Activated CD8-positive, alpha-beta memory T cell treated with anti-CD3 and anti-CD28 coated beads, Interleukin-2, amount 10 ng/mL, durations not matched to agents 7 days and 5 days (primary cell): ENCODE measurements at regions of chr12 and their contacts with region 1.

Region 1: GRCh38 chr12:123365025-123365917 is 624 bp upstream of the SBNO1 start:
- DNase-seq: peak; percentile 99
- ATAC-seq: peak; percentile 81
- H3K4me3 Mint-ChIP-seq: peak overlapping the region; percentile 81
- H3K27ac Mint-ChIP-seq: peak overlapping the region; percentile 96
- H3K4me1 Mint-ChIP-seq: peaks cover 16% of the 10 kb centered on the region
- H3K27me3 Mint-ChIP-seq: no peaks in the 10 kb centered on the region

Region 2: GRCh38 chr12:123271001-123271729 is 94.1 kb before region 1 on chr12:
- CTCF ChIA-PET with region 1: interaction called, 11 read pairs
- DNase-seq: peak; percentile 84
- ATAC-seq: peak; percentile 86
- H3K4me3 Mint-ChIP-seq: peak overlapping the region; percentile 78
- H3K27ac Mint-ChIP-seq: no peak overlapping the region
- H3K4me1 Mint-ChIP-seq: peaks cover 18% of the 10 kb centered on the region
- H3K27me3 Mint-ChIP-seq: no peaks in the 10 kb centered on the region

Region 3: DNA sequence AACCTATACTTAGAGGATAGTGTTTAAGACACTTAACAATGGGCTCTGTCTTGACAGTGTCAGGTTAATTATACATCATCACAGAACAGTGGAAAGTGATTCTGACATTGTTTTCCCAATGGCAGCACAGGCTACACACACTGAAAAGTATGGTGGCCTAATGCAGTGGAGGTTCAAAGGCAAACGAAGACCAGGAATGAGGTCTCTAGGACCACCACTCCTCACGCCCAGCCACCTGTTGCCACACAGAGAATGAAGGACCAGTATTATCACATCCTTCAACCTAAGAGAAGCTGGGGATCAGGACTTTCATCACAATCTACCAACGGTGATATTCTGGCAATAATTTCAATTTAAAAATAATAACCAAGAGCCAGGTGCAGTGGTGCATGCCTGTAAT is 59.1 kb before region 1 on chr12:
- CTCF ChIA-PET with region 1: no interaction called
- DNase-seq: no peak
- ATAC-seq: no peak
- H3K4me3 Mint-ChIP-seq: no peak overlapping the region
- H3K27ac Mint-ChIP-seq: no peak overlapping the region
- H3K4me1 Mint-ChIP-seq: no peaks in the 10 kb centered on the region
- H3K27me3 Mint-ChIP-seq: no peaks in the 10 kb centered on the region

Region 4: DNA sequence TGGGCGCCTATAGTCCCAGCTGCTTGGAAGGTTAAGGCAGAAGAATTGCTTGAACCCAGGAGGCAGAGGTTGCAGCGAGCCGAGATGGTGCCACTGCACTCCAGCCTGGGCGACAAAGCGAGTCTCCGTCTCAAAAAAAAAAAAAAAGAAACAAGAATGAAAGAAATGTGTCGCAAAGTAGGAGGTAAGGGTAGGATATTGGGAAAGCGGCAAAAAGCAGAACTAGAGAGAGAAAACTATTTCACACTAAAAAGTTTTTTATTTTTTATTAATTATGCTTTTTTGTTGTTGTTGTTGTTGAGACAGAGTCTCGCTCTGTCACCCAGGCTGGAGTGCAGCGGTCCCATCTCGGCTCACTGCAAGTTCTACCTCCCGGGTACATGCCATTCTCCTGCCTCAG is 18.3 kb before region 1 on chr12:
- CTCF ChIA-PET with region 1: no interaction called
- DNase-seq: no peak
- ATAC-seq: no peak
- H3K4me3 Mint-ChIP-seq: no peak overlapping the region
- H3K27ac Mint-ChIP-seq: no peak overlapping the region
- H3K4me1 Mint-ChIP-seq: peaks cover 5% of the 10 kb centered on the region
- H3K27me3 Mint-ChIP-seq: no peaks in the 10 kb centered on the region

Region 5: GRCh38 chr12:123384318-123384993 is 19.2 kb after region 1 on chr12:
- CTCF ChIA-PET with region 1: interaction called, 26 read pairs
- DNase-seq: peak; percentile 58
- ATAC-seq: peak; percentile 4
- H3K4me3 Mint-ChIP-seq: peak overlapping the region; percentile 80
- H3K27ac Mint-ChIP-seq: peak overlapping the region; percentile 87
- H3K4me1 Mint-ChIP-seq: peaks cover 26% of the 10 kb centered on the region
- H3K27me3 Mint-ChIP-seq: no peaks in the 10 kb centered on the region